ENCODE measurements at regions of chr12 and their contacts with region 1.

Region 1: DNA sequence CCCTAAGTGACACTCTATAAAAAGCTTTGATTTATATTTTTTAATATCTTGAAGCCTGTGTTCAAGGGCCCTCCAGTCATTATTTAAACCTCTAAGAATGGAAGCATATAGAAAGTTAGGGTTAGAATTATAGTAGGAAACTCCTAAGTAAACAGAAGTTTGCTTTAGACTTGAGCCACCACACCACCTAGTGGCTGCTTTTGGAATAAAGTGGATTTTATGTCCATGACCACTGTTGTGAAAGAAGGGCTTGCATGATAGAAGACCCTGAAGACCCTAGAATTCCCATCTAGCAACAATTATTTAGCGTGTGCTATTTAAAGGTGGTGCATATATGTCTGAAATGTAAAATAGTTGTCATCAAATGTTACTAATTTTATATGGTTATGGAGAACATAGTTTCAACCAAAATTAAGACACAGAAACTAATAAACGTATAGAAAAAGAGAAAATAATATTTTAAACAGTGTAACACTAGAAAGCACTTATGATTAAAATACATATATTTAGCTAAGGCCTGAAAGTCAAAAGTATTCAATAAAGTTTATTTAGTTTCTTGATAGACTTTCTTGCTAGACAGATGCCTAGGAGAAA is 21.3 kb downstream of the LRRIQ1 start:
- DNase-seq: peak; percentile 39
- ATAC-seq: no peak
- H3K4me3 ChIP-seq: no peak overlapping the region
- H3K27ac ChIP-seq: no peak overlapping the region
- H3K4me1 ChIP-seq: no peaks in the 10 kb centered on the region
- H3K27me3 ChIP-seq: no peaks in the 10 kb centered on the region
- CTCF ChIP-seq: peak; percentile 20 to 81 (median 62); a peak in 5 of 6 replicates
- POLR2A ChIP-seq: no peak
- RAD21 ChIP-seq: peak; percentile 65

Region 2: GRCh38 chr12:84874125-84874824 is 183.2 kb before region 1 on chr12:
- CTCF ChIA-PET with region 1: interaction called, 6 read pairs
- POLR2A ChIA-PET with region 1: no interaction called
- RAD21 ChIA-PET with region 1: no interaction called
- intact Hi-C with region 1: loop called (anchors 1 kb)
- DNase-seq: peak; percentile 55
- ATAC-seq: peak; percentile 84
- H3K4me3 ChIP-seq: no peak overlapping the region
- H3K27ac ChIP-seq: no peak overlapping the region
- H3K4me1 ChIP-seq: no peaks in the 10 kb centered on the region
- H3K27me3 ChIP-seq: no peaks in the 10 kb centered on the region
- CTCF ChIP-seq: peak; percentile 58 to 84 (median 80)
- POLR2A ChIP-seq: no peak
- RAD21 ChIP-seq: peak; percentile 88

Region 3: DNA sequence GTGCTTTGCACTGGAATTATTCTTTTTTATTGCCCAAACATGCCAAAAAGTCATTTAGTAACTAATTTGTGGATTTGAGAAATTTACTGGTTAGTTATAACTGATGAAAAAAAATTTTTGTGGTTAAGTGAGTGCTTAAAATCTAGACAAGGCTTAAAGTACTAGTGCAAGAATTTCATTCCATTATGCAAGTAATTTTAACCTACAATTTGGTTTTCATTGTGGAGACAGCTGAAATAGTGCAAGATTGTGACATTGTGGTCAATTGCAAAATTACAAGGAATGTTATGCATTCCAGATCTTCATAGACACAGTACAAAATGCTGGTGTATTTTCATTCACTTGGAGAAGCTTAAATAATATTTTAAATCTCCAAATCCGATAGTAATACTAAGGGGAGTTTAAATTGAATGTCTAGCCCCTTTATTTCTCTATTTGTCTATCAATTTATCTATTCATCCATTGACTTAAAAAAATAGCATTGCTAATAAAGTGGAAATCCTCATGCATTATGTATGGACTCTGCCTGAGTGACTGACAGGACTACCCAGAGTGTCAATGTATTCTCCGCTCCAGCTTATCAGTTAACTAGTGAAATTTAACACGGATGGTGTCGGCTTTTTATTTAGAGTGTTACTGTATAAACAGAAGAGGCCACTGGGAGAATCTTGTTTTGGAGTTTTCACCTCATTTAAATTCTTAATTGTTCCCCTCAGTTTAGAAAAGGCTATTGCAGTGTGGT is 348.5 kb after region 1 on chr12:
- CTCF ChIA-PET with region 1: no interaction called
- POLR2A ChIA-PET with region 1: no interaction called
- RAD21 ChIA-PET with region 1: no interaction called
- intact Hi-C with region 1: no loop called
- DNase-seq: no peak
- ATAC-seq: no peak
- H3K4me3 ChIP-seq: no peak overlapping the region
- H3K27ac ChIP-seq: no peak overlapping the region
- H3K4me1 ChIP-seq: no peaks in the 10 kb centered on the region
- H3K27me3 ChIP-seq: no peaks in the 10 kb centered on the region
- CTCF ChIP-seq: no peak
- POLR2A ChIP-seq: no peak
- RAD21 ChIP-seq: no peak

Region 4: GRCh38 chr12:85468356-85469157 is 411.1 kb after region 1 on chr12:
- CTCF ChIA-PET with region 1: no interaction called
- POLR2A ChIA-PET with region 1: no interaction called
- RAD21 ChIA-PET with region 1: no interaction called
- intact Hi-C with region 1: no loop called
- DNase-seq: peak; percentile 36
- ATAC-seq: peak; percentile 72; the same call in 1 of the 2 replicates
- H3K4me3 ChIP-seq: no peak overlapping the region
- H3K27ac ChIP-seq: no peak overlapping the region
- H3K4me1 ChIP-seq: no peaks in the 10 kb centered on the region
- H3K27me3 ChIP-seq: no peaks in the 10 kb centered on the region
- CTCF ChIP-seq: peak; percentile 72 to 81 (median 73); a peak in 5 of 6 replicates
- POLR2A ChIP-seq: no peak
- RAD21 ChIP-seq: peak; percentile 84

Measured in HCT116 (cell line).